Activated CD4-positive, alpha-beta T cell treated with anti-CD3 and anti-CD28 coated beads for 36 hours (primary cell): ENCODE measurements at regions of chr19 and their contacts with region 1.

Region 1: GRCh38 chr19:40798223-40798996 is 581 bp upstream of the EGLN2 start:
- DNase-seq: peak; percentile 100
- ATAC-seq: peak; percentile 82
- H3K4me3 Mint-ChIP-seq: peak overlapping the region; percentile 91
- H3K27ac Mint-ChIP-seq: peak overlapping the region; percentile 97
- H3K4me1 Mint-ChIP-seq: peaks cover 49% of the 10 kb centered on the region
- H3K27me3 Mint-ChIP-seq: no peaks in the 10 kb centered on the region

Region 2: GRCh38 chr19:39833464-39834286 is 964.7 kb before region 1 on chr19 and contains the start of gene DYRK1B:
- CTCF ChIA-PET with region 1: no interaction called
- POLR2A ChIA-PET with region 1: no interaction called
- intact Hi-C with region 1: loop called in 1 of 2 experiments (anchors 5 kb)
- DNase-seq: peak; percentile 99
- ATAC-seq: peak; percentile 92
- H3K4me3 Mint-ChIP-seq: peak within 1 kb of the TSS; percentile 64
- H3K27ac Mint-ChIP-seq: peak within 1 kb of the TSS; percentile 84
- H3K4me1 Mint-ChIP-seq: peaks cover 25% of the 10 kb centered on the region
- H3K27me3 Mint-ChIP-seq: no peaks in the 10 kb centered on the region
- total RNA-seq, gene DYRK1B: 4.8 to 6.9 TPM

Region 3: DNA sequence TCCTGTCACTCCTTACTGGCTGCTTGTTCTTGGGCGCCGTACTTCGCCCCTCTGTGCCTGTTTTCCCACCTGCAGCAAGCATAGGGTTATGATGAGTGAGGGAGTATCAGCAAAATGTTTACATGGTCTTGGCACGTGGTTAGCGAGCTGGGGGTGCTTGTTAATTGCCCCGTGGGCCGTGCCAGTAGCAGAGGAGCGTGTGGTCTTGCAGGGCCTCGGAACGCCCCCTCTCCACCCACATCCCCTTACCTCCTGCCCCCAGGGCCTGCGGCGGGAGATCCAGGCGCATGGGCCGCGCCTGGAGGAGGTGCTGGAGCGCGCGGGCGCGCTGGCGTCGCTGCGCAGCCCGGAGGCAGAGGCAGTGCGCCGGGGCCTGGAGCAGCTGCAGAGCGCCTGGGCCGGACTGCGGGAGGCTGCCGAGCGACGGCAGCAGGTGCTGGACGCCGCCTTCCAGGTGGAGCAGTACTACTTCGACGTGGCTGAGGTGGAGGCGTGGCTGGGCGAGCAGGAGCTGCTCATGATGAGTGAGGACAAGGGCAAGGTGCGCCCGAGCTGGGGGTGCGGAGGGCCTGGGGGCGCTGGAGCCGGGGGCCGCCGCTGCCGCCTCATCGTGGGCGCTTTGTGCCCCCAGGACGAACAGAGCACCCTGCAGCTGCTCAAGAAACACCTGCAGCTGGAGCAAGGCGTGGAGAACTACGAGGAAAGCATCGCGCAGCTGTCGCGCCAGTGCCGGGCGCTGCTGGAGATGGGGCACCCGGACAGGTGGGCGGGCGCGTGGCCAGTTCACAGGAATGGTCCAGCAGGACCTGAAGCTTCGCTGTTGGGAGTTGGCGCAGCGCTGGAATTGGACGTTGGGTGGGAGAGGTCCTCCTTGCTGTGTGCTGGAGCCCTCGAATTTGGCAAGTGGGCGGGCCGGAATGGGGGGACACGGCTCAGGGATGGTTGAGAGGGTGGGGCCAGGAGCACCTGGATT is 244.2 kb before region 1 on chr19:
- CTCF ChIA-PET with region 1: no interaction called
- POLR2A ChIA-PET with region 1: no interaction called
- intact Hi-C with region 1: no loop called
- DNase-seq: no peak
- ATAC-seq: no peak
- H3K4me3 Mint-ChIP-seq: no peak overlapping the region
- H3K27ac Mint-ChIP-seq: no peak overlapping the region
- H3K4me1 Mint-ChIP-seq: peaks cover 5% of the 10 kb centered on the region
- H3K27me3 Mint-ChIP-seq: peaks cover 38% of the 10 kb centered on the region